Activated CD8-positive, alpha-beta T cell treated with anti-CD3 and anti-CD28 coated beads for 36 hours (primary cell): ENCODE measurements at regions of chr21 and their contacts with region 1.

Region 1: DNA sequence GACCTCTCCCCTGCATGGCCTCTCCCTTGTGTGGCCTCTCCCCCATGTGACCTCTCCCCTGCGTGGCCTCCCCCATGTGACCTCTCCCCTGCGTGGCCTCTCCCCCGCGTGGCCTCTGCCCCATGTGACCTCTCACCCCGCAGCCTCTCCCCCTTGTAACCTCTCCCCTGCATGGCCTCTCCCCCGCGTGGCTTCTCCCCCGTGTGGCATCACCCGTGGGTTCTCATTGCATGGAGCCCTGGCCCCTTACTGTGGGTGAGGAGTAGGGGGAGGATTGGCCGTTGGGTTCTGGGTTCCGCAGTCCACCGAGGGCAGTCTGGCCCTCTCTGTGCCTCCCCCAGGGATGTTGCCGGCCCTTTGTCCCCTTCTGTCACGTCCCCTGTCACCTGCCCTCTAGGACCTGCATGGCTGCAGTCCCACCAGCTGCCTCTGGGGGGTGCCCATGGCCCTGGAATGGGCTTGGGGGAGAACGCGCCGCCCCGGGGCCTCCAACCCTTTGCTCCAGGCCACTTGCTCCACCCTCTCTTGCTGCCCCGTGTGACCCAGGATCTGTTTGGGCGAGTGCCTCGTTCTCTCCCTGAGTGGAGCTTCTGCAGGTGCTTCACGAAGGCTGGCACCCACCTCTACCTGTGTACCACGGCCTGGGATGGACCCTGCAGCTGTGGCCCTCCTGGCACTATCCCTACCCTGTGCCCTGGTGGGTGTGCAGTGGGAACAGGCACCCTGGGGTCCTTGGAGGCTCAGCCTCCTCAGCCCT is 21.3 kb downstream of the RRP1 start:
- DNase-seq: peak; percentile 95
- ATAC-seq: peak; percentile 99
- H3K4me3 Mint-ChIP-seq: no peak overlapping the region
- H3K27ac Mint-ChIP-seq: no peak overlapping the region
- H3K4me1 Mint-ChIP-seq: peaks cover 7% of the 10 kb centered on the region
- H3K27me3 Mint-ChIP-seq: no peaks in the 10 kb centered on the region
- CTCF ChIP-seq: peak; percentile 92

Region 2: DNA sequence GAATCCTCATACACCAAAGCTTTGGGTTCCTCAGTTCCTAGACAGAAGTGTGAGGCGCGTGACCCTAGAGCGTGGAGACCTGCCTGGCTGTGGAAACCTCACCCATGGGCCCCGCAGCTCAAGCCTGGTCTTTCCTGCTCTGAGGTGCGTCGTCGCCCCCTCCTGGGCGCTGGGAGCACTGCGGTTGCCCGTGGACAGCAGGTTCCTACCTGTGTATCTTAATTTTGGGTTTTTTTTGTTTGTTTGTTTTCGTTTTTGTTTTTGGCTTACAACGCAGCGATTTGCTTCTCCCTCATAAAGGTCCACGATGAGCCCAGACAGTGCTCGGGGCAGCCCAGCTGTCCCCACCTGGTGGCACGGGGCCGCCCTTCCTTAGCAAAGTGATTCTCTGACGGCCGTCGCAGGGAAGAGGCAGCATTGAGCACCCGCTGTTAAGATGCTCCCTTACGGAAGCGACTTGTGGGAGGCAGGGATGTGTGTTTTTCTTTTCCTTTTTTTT is 164.9 kb after region 1 on chr21:
- CTCF ChIA-PET with region 1: interaction called, 10 read pairs
- POLR2A ChIA-PET with region 1: interaction called, 4 read pairs
- intact Hi-C with region 1: no loop called
- DNase-seq: peak; percentile 91
- ATAC-seq: peak; percentile 98
- H3K4me3 Mint-ChIP-seq: no peak overlapping the region
- H3K27ac Mint-ChIP-seq: no peak overlapping the region
- H3K4me1 Mint-ChIP-seq: peaks cover 6% of the 10 kb centered on the region
- H3K27me3 Mint-ChIP-seq: no peaks in the 10 kb centered on the region
- CTCF ChIP-seq: peak; percentile 90